Sigmoid colon (tissue), 7 donors: ENCODE measurements at regions of chr9 and their contacts with region 1.

Region 1: DNA sequence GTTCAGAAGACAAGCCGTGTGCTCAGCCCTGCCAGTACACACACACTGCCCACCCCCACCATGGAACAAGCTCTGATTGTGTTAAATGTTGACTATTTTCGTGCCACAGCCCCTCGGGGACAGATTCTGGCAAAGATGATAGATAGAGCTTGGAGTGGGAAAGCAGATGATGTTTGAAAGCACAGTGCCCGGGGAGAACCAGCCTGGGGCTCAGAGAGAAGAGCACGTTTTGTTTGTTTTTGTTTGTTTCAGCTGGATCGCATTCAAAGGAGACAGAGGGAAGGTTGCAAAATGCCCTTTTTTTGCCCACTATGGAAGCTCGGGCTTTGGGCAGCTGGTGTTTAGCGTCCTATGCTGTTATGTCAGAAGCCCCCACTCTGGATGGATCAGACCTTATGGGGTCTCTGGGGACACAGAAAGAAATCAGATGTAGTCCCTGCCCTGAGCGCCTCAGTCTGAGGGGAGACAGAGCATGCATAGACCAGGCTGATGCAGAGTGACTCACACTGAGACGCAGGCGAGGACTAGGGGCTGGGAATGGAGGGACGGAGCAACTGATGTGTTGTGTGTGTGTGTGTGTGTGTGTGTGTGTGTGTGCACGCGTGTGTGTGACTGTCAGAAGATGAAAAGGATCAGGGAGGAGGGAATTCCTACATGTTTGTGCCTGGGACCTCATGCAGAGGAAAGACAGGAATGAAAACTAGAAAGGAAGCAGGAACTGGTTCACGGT is 229.7 kb downstream of the MELK start:
- DNase-seq: no peak
- H3K4me3 ChIP-seq: no peak overlapping the region
- H3K27ac ChIP-seq: no peak overlapping the region
- H3K4me1 ChIP-seq: no peaks in the 10 kb centered on the region
- H3K27me3 ChIP-seq: peaks cover 0 to 27% (median 0%) of the 10 kb centered on the region in 3 donors
- CTCF ChIP-seq: no peak
- EP300 ChIP-seq: no peak
- POLR2A ChIP-seq: no peak

Region 2: GRCh38 chr9:36873247-36873875 is 71.0 kb after region 1 on chr9:
- intact Hi-C with region 1: loop called (anchors 10 kb)
- DNase-seq: peak; percentile 67
- H3K4me3 ChIP-seq: no peak overlapping the region
- H3K27ac ChIP-seq: no peak overlapping the region
- H3K4me1 ChIP-seq: no peaks in the 10 kb centered on the region
- H3K27me3 ChIP-seq: no peaks in the 10 kb centered on the region
- CTCF ChIP-seq: peak; percentile 29 to 76 (median 56)
- EP300 ChIP-seq: no peak
- POLR2A ChIP-seq: no peak